Colonic mucosa (tissue), 4 donors: ENCODE measurements at regions of chr17 and their contacts with region 1.

Region 1: DNA sequence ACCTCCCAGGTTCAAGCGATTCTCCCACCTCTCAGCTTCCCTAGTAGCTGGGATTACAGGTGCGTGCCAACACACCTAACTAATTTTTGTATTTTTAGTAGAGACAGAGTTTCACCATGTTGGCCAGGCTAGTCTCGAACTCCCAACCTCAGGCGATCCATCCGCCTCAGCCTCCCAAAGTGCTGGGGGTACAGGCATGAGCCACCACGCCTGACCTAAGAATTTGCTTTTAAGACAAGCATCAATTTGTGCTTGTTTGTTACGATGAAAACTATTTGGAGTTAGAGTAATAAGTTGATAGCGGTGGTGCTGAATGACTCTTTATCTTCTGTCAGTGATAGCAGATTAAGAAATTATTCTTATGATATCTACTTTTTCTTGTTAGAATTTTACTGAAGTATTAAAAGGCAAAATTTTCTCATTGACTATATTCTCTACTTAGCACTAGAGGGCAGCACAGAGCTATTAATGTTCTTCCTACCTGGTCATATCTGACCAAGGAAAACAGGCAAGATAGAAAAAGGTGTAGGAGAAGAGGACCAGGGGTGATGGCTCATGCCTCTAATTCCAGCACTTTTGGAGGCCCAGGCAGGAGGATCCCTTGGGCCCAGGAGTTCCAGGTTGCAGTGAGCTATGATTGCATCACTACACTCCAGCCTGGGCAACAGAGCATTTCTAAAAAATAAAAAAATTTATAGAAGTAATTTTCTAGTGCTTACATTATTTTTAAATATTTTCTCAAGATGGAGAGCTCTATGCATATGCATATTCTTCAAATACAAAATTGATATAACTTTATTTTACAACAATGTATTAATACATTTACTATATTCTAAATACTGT is 24.5 kb downstream of the STXBP4 start:
- DNase-seq: no peak
- H3K4me3 ChIP-seq: no peak overlapping the region
- H3K27ac ChIP-seq: no peak overlapping the region
- H3K4me1 ChIP-seq: no peaks in the 10 kb centered on the region
- H3K27me3 ChIP-seq: no peaks in the 10 kb centered on the region
- CTCF ChIP-seq: peak; percentile 55

Region 2: DNA sequence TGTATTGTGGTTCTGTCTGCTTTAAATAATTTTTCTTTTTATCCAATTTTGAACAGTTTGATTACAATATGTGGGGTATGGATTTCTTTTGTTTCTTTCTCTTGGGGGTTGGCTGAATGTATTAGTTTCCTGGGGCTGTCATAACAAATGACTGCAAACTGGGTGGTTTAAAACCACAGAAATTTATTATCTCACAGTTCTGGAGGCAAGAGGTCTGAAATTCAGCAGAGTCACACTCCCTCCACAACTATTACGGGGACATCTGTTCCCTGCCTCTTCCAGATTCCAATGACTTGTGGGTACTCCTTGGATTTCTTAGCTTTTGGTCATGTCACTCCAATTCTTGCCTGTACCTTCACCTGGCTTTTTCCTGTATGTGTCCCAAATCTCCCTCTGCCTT is 48.2 kb before region 1 on chr17:
- intact Hi-C with region 1: no loop called
- DNase-seq: no peak
- H3K4me3 ChIP-seq: no peak overlapping the region
- H3K27ac ChIP-seq: no peak overlapping the region
- H3K4me1 ChIP-seq: no peaks in the 10 kb centered on the region
- H3K27me3 ChIP-seq: no peaks in the 10 kb centered on the region
- CTCF ChIP-seq: no peak

Region 3: GRCh38 chr17:55348749-55349354 is 355.8 kb after region 1 on chr17:
- intact Hi-C with region 1: loop called (anchors 5 kb)
- DNase-seq: peak; percentile 46
- H3K4me3 ChIP-seq: no peak overlapping the region
- H3K27ac ChIP-seq: no peak overlapping the region
- H3K4me1 ChIP-seq: no peaks in the 10 kb centered on the region
- H3K27me3 ChIP-seq: no peaks in the 10 kb centered on the region
- CTCF ChIP-seq: peak; percentile 91